HEK293T (cell line): ENCODE measurements at regions of chr17 and their contacts with region 1.

Region 1: GRCh38 chr17:81394921-81395599 is at the start of gene BAHCC1:
- DNase-seq: peak; percentile 92

Region 2: DNA sequence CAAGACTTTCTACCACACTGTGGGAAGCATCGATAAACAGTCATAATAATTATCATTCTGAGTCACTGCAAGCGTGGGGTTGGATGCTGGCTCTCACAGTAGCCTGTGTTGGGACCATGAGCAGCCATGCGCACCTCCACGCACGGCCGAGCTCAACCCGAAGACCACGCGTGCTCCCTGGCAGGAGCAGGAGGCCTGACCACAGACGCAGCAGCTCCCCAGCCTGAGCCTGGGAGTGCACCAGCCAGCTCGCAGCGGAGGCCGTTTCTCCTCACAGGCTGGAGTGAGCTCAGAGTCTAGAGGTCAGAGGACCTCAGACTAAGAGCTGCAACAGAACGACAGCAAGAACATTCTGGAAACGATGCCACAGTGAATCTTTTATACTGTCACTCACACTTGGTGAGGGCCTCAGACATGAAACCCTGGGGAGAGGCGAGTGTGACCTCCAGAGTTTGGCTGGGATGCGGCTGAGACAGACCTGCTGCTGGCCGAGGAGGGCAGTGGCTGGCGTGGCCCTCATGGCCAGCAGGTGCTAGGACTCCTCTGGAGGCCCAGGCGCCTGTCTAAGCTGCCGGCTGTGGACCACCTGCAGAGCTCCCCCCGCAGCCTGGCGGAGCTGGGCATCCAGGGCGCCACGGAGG is 149.9 kb before region 1 on chr17:
- CTCF ChIA-PET with region 1: no interaction called
- POLR2A ChIA-PET with region 1: no interaction called
- DNase-seq: no peak

Region 3: DNA sequence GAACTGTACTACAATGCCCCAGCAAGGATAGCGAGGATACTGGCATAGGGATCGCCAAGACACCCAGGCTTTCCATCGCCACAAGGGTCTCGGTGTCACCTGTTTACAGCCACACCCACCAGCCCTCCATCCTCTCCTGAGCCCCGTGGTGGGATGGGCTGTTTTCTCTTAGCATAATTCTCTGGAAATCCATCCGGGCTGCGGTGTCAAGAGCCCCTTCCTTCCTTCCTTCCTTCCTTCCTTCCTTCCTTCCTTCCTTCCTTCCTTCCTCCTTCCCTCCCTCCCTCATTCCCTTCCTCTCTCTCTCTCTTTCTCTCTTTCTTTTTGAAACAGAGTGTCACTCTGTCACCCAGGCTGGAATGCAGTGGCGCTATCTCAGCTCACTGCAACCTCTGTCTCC is 35.8 kb before region 1 on chr17:
- CTCF ChIA-PET with region 1: no interaction called
- POLR2A ChIA-PET with region 1: no interaction called
- DNase-seq: no peak

Region 4: DNA sequence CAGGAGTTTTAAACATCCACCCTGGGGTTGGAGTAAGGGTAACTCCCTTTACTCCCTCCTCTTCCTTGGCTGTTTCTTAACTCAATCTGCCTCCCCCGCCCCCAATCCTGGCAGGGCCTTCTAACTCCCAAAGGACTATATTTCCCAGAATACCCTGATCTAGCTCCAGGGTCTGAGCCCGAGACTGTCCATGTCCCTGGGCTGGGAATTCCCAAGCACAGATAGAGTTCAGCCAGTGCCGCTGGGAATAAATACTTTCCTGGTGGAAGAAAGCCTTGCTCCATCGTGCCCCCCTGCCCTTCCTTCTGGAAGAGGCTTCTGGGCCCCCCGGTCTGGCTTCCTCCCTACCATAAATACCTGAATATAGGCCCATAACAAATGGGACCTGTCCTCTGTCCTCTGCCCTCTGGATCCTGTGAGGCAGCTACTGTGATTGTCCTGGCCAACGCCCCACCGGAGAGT is 10.4 kb after region 1 on chr17:
- CTCF ChIA-PET with region 1: interaction called, 6 read pairs
- POLR2A ChIA-PET with region 1: interaction called, 14 read pairs
- DNase-seq: no peak

Region 5: GRCh38 chr17:81440876-81441244 is 45.8 kb after region 1 on chr17:
- CTCF ChIA-PET with region 1: interaction called, 11 read pairs
- POLR2A ChIA-PET with region 1: interaction called, 7 read pairs
- DNase-seq: peak; percentile 88